Right ventricle myocardium superior (tissue), 1 donor: ENCODE measurements at regions of chr6 and their contacts with region 1.

Region 1: DNA sequence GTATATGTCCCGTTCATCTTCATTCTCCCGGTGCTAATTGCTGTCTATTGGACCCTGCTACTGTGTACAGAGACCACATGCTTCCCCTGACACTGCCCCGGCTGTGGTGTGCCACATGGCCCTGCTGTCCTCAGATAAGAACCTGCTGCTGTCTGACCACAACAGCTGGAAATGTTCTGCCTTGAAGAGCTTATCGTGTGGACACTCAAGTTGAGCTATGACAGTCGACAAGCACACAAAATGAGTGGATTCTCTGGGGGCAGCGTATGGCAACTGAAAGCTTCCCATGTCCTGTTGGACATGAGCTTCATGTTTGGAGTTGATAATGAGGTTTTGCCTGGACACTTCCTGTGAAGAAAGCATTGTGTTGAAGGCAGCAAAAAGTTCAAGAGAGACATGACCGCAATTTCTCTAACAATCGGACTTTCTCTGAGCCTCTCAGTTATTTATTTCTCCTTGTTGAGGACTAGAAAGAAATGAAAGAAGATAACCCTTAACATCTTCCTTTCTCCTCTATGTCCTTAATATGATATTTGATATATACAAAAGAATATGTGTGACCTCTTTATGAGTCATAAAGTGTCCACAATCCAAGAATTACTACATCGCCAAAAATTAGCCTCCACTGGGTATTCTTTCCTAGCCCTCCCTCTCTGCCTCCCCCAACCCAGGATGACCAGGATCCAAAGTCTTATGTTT is 187.1 kb upstream of the TCF21 start:
- DNase-seq: peak; percentile 68
- ATAC-seq: peak; percentile 75

Region 2: DNA sequence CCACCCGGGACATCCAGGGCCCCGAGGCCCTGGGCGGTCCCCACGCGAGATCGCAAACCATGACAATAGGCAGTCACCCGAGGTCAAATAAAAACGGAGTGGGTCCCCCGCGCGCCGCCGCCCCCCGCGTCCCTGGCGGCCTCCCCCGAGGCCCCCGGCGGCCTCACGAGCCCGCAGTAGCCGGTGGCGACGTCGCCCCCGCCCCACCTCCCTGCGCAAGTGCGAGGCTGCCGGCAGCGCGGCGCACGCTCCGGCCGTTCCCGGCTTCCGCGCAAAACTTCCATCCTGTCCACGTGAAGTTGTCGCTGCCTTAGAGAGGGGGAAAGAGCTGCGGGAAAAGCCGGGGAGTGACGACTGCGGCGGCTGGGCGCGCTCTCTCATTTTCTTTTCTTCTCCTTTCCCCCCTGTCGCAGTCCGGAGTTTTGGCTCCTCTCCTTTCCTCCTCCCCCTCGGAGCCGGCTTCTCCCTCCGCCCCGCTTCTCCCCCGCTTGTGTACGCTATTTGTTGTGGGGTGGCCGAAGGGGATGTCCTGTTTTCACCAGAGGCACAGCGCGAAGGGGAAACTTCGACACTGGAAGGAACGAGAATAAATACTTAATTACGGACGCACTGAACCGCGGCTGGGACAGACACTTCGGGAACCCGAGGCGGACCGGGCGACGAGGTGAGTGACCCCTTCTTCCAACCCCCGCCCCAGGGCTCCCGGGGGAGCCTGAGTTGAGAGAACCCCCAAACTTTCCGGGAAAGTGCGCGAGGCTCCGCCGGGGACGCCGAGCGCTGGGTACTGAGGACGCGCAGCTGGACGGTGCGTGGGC is 460.5 kb before region 1 on chr6 and contains the start of gene EYA4:
- intact Hi-C with region 1: no loop called
- DNase-seq: peak; percentile 56
- ATAC-seq: peak; percentile 76
- total RNA-seq, gene EYA4: 20.4 TPM

Region 3: GRCh38 chr6:133889557-133890403 is 188.0 kb after region 1 on chr6:
- intact Hi-C with region 1: loop called (anchors 5 kb)
- DNase-seq: peak; percentile 63
- ATAC-seq: peak; percentile 48